MCF 10A (cell line): ENCODE measurements at regions of chr6 and their contacts with region 1.

Region 1: DNA sequence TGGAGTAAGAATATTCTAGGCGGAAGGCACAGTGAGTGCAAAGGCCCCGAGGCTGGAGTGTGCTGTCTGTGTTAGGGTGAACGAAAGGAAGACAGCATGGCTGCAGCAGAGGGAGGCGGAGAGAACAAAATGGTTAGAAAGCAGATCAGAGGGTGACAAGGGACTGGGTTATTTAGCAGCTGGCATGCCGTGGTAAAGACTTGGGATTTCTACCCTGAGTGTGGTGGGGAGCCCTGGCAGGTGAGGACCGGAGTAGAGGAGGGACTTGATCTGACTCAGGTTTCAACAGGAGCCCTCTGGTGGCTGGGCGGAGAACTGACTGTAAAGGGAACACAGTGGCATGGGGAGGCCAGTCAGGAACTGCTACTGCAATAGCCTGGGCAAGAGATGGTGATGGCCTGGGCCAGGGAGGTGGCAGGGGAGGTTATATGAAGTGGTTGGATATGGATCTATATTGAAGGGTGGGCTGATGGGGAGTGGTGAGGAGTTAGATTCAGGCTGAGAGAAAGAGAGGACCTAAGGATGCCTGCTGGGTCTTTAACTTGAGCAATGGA is 38.0 kb downstream of the PIM1 start:
- DNase-seq: peak; percentile 87
- H3K4me3 Mint-ChIP-seq: no peak overlapping the region
- H3K27ac Mint-ChIP-seq: no peak overlapping the region
- H3K4me1 Mint-ChIP-seq: peaks cover 7% of the 10 kb centered on the region
- H3K27me3 Mint-ChIP-seq: no peaks in the 10 kb centered on the region
- CTCF ChIP-seq: peak; percentile 60

Region 2: GRCh38 chr6:36885461-36886401 is 322.2 kb before region 1 on chr6 and contains the start of gene C6orf89:
- CTCF ChIA-PET with region 1: interaction called, 9 read pairs
- POLR2A ChIA-PET with region 1: interaction called, 5 read pairs
- intact Hi-C with region 1: loop called (anchors 10 kb)
- DNase-seq: peak; percentile 99
- H3K4me3 Mint-ChIP-seq: peak within 1 kb of the TSS; percentile 80
- H3K27ac Mint-ChIP-seq: peak within 1 kb of the TSS; percentile 88
- H3K4me1 Mint-ChIP-seq: peaks cover 16% of the 10 kb centered on the region
- H3K27me3 Mint-ChIP-seq: no peaks in the 10 kb centered on the region
- CTCF ChIP-seq: peak; percentile 63
- total RNA-seq, gene C6orf89: 36.9 and 43.1 TPM in 2 replicates

Region 3: GRCh38 chr6:37051138-37052026 is 156.6 kb before region 1 on chr6:
- CTCF ChIA-PET with region 1: interaction called, 24 read pairs
- POLR2A ChIA-PET with region 1: no interaction called
- intact Hi-C with region 1: loop called (anchors 1 kb)
- DNase-seq: peak; percentile 75
- H3K4me3 Mint-ChIP-seq: no peak overlapping the region
- H3K27ac Mint-ChIP-seq: no peak overlapping the region
- H3K4me1 Mint-ChIP-seq: peaks cover 17% of the 10 kb centered on the region
- H3K27me3 Mint-ChIP-seq: no peaks in the 10 kb centered on the region
- CTCF ChIP-seq: peak; percentile 86